CD14-positive monocyte (primary cell): ENCODE measurements at regions of chr3 and their contacts with region 1.

Region 1: DNA sequence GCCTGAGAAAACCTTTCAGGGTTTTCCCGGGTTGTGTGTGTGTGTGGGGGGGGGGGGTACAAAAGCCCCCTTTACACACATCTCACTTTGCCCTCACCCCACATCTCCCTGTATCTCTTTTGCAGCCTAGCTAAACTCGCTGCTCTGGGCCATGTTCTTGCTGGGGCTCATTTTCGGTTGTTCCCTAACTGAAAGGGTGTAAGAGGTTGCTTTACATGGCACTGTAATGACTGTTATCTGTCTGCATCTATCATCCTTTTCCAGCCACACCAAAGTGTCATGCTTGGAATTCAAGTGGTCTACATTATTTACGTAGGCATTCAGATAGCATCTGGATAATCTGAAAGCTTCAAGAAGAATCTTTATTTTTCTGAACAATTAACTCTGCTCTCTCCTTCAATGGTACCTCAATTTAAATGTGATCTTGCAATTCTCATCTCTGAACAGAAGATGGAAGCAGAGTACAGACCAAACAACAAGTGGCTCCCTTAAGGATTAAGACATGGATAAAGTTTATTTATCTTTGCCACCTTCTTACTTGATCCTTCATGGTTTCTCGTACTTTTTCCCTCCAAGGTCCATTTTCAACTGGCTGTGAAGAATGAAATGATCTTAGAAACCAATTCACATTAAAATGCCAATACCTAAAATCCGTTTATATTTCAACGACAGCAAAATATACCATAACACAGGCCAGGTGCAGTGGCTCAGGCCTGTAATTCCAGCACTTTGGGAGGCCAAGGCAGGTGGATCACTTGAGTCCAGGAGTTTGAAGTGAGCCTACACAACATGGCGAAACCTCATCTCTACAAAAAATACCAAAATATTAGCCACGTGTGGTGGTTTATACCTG is 34.9 kb downstream of the DCLK3 start:
- DNase-seq: peak; percentile 14 to 46 (median 34)
- H3K4me3 ChIP-seq: no peak overlapping the region
- H3K4me3 Mint-ChIP-seq: no peak overlapping the region
- H3K27ac ChIP-seq: no peak overlapping the region
- H3K27ac Mint-ChIP-seq: no peak overlapping the region
- H3K4me1 ChIP-seq: no peaks in the 10 kb centered on the region
- H3K4me1 Mint-ChIP-seq: no peaks in the 10 kb centered on the region
- H3K27me3 ChIP-seq: no peaks in the 10 kb centered on the region
- H3K27me3 Mint-ChIP-seq: peaks cover 2 to 6% (median 4%) of the 10 kb centered on the region in 3 donors
- CTCF ChIP-seq: peak; percentile 71

Region 2: GRCh38 chr3:36868614-36869436 is 139.4 kb after region 1 on chr3:
- intact Hi-C with region 1: loop called (anchors 2 kb)
- DNase-seq: peak; percentile 39 to 59 (median 58)
- H3K4me3 ChIP-seq: no peak overlapping the region
- H3K4me3 Mint-ChIP-seq: no peak overlapping the region
- H3K27ac ChIP-seq: no peak overlapping the region
- H3K27ac Mint-ChIP-seq: no peak overlapping the region
- H3K4me1 ChIP-seq: peaks cover 9% of the 10 kb centered on the region in 2 donors
- H3K4me1 Mint-ChIP-seq: peaks cover 7% of the 10 kb centered on the region
- H3K27me3 ChIP-seq: no peaks in the 10 kb centered on the region
- H3K27me3 Mint-ChIP-seq: no peaks in the 10 kb centered on the region
- CTCF ChIP-seq: peak; percentile 92

Region 3: GRCh38 chr3:36957862-36958686 is 228.6 kb after region 1 on chr3:
- intact Hi-C with region 1: loop called (anchors 10 kb)
- DNase-seq: peak; percentile 27 to 89 (median 41)
- H3K4me3 ChIP-seq: no peak overlapping the region
- H3K4me3 Mint-ChIP-seq: no peak overlapping the region
- H3K27ac ChIP-seq: no peak overlapping the region
- H3K27ac Mint-ChIP-seq: peak overlapping the region in 2 of 7 donors; percentile 27 to 46
- H3K4me1 ChIP-seq: no peaks in the 10 kb centered on the region
- H3K4me1 Mint-ChIP-seq: peaks cover 13% of the 10 kb centered on the region
- H3K27me3 ChIP-seq: no peaks in the 10 kb centered on the region
- H3K27me3 Mint-ChIP-seq: peaks cover 0 to 3% (median 0%) of the 10 kb centered on the region in 3 donors
- CTCF ChIP-seq: no peak